PC-9 (cell line): ENCODE measurements at regions of chr2 and their contacts with region 1.

Region 1: DNA sequence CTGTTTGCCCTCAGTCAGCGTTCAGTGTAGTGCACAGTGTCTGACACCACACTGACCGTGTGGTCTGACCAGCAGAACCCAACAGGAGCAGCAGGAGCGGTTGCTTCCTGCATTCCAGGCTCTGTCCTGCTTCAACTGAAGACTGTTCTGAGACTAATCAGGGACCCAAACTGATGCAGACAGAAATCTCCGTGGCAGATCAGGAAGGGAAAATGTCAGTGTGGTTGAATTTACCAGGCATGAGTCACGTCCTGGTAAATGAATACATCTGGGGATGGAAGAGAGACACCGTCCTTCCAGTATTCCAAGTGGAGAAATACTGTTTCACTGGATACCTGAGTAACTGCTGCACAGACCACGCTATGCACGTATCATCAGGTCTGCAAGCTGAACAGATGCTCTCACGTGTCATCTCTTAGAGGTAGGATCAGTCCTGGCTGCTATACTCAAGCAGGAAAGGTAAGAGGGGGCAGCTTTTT is 223.6 kb upstream of the EPAS1 start:
- DNase-seq: peak; percentile 79 to 99
- H3K4me3 ChIP-seq: peak overlapping the region; percentile 30; the same call in 1 of the 2 replicates
- H3K27ac ChIP-seq: peak overlapping the region; percentile 90
- H3K4me1 ChIP-seq: peaks cover 54% of the 10 kb centered on the region
- H3K27me3 ChIP-seq: no peaks in the 10 kb centered on the region
- CTCF ChIP-seq: no peak

Region 2: GRCh38 chr2:45000921-45001868 is 1072.4 kb before region 1 on chr2:
- CTCF ChIA-PET with region 1: no interaction called
- POLR2A ChIA-PET with region 1: interaction called, 17 read pairs
- intact Hi-C with region 1: no loop called
- DNase-seq: peak in 1 of 2 experiments; percentile 42
- H3K4me3 ChIP-seq: no peak overlapping the region
- H3K27ac ChIP-seq: no peak overlapping the region
- H3K4me1 ChIP-seq: no peaks in the 10 kb centered on the region
- H3K27me3 ChIP-seq: no peaks in the 10 kb centered on the region
- CTCF ChIP-seq: no peak

Region 3: DNA sequence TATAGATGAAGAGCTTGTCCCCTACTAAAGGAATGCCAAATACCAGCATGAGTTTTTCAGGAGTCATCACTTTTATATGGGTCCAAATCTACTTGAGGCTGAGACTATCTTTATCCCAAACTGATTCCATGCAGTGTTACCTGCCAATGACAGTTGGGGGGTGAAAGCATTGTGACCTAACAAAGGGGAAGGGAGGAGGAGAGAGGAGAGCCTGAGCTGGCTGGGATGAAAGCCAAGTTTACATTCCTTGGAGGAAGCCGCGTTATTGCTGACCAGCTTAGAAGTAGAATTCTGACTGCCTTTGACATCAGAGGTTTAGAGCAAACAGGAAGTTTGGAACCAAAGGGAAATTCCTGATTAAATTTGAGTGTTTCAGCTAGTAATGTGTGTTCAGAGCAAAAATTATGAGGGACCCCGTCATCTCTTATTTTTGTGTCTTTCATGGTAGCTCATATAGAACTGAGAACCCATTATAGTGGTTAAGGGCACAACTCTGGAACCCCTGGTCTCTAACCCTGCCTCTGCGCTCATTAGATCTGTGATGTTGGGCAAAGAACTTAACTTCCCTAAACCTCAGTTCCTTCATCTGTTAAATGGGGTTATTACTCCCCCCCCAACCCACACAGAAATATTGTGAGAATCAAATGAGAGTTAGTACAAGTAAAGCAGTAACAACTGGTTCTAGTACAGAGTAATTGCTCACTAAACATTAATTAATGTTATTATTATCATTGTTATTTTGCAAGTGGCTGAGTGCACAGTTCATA is 24.3 kb after region 1 on chr2:
- CTCF ChIA-PET with region 1: no interaction called
- POLR2A ChIA-PET with region 1: no interaction called
- intact Hi-C with region 1: loop called (anchors 1 kb)
- DNase-seq: peak; percentile 79 to 95
- H3K4me3 ChIP-seq: 0 out of 2 replicates have a peak overlapping the region, but pooled peaks have one; percentile 7
- H3K27ac ChIP-seq: peak overlapping the region; percentile 93
- H3K4me1 ChIP-seq: peaks cover 26% of the 10 kb centered on the region
- H3K27me3 ChIP-seq: no peaks in the 10 kb centered on the region
- CTCF ChIP-seq: no peak

Region 4: DNA sequence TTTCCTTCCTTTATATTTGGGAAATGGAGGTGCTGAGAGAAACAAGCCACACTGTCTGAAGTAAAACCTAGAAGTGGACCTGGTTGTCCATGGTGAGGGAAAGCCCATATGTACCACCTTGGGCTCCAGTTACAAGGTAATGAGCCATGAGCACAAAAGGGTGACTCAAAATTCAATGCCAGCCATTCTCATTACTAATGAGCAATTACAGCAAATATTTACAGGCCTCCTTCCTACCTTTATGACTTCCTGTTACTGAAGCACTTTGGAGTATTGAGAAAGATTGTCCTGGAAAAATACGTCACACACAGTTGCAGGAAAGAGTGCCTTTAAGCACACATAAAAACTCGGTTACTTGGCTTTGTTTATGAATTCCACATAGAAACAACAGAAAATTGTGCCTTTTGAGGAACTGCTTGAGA is 232.8 kb after region 1 on chr2:
- CTCF ChIA-PET with region 1: interaction called, 15 read pairs
- POLR2A ChIA-PET with region 1: interaction called, 11 read pairs
- intact Hi-C with region 1: no loop called
- DNase-seq: peak; percentile 40 to 100
- H3K4me3 ChIP-seq: peak overlapping the region; percentile 43; the same call in 1 of the 2 replicates
- H3K27ac ChIP-seq: peak overlapping the region; percentile 87
- H3K4me1 ChIP-seq: peaks cover 98% of the 10 kb centered on the region
- H3K27me3 ChIP-seq: no peaks in the 10 kb centered on the region
- CTCF ChIP-seq: no peak